ENCODE measurements at regions of chr2 and their contacts with region 1.

Region 1: DNA sequence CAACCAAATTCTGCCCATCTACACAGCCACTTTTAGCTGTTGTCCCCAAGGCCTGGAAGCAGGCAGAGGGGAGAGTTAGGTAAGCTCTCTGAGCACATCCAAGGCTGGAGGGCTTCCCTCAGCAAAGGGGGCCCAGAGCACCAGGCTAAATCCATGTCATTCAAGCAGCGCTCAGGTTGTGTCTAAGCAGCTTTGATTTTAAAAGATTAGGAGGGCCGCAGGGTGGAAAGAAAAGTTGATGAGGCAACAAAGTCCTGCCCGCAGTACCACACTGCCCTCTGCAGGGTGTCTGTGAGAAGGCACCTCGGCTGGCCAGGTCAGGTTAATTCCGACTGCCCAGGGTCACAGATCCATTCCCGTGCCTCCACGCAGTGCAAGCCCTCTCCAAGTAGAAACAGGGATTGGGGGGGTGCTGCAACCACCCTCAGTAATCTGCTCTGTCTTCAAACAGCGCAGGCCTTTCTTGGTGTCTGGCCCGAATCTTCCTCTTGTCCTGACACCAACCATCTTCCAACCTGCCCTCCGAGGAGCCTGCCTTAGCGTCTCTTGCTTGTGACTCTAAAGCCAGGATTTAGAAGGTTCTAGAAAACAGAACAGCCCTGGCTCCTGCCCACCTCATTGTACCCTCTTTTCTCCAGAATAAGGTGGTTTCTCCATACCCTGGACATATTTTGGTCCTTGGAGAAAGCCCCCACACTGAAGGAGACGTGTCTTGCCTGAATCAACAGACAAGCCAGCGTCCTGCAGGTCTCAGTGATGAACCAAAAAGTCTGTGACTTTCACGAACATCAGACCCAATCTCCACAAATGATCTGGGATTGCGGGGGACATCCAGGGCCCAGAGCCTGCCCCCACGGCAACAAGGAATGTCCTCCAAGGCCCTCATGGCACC is 289.2 kb downstream of the TNS1 start:
- DNase-seq: no peak
- H3K4me3 ChIP-seq: no peak overlapping the region
- H3K27me3 ChIP-seq: no peaks in the 10 kb centered on the region
- CTCF ChIP-seq: peak; percentile 98

Region 2: GRCh38 chr2:217510771-217511291 is 202.8 kb before region 1 on chr2:
- CTCF ChIA-PET with region 1: interaction called, 21 read pairs
- POLR2A ChIA-PET with region 1: no interaction called
- DNase-seq: peak; percentile 38
- H3K4me3 ChIP-seq: no peak overlapping the region
- H3K27me3 ChIP-seq: no peaks in the 10 kb centered on the region
- CTCF ChIP-seq: peak; percentile 80

Region 3: GRCh38 chr2:217521820-217522219 is 191.8 kb before region 1 on chr2:
- CTCF ChIA-PET with region 1: interaction called, 11 read pairs
- POLR2A ChIA-PET with region 1: no interaction called
- DNase-seq: no peak
- H3K4me3 ChIP-seq: no peak overlapping the region
- H3K27me3 ChIP-seq: no peaks in the 10 kb centered on the region
- CTCF ChIP-seq: no peak

Region 4: GRCh38 chr2:217736776-217737550 is 23.3 kb after region 1 on chr2:
- CTCF ChIA-PET with region 1: no interaction called
- POLR2A ChIA-PET with region 1: no interaction called
- DNase-seq: no peak
- H3K4me3 ChIP-seq: no peak overlapping the region
- H3K27me3 ChIP-seq: no peaks in the 10 kb centered on the region
- CTCF ChIP-seq: no peak

Region 5: DNA sequence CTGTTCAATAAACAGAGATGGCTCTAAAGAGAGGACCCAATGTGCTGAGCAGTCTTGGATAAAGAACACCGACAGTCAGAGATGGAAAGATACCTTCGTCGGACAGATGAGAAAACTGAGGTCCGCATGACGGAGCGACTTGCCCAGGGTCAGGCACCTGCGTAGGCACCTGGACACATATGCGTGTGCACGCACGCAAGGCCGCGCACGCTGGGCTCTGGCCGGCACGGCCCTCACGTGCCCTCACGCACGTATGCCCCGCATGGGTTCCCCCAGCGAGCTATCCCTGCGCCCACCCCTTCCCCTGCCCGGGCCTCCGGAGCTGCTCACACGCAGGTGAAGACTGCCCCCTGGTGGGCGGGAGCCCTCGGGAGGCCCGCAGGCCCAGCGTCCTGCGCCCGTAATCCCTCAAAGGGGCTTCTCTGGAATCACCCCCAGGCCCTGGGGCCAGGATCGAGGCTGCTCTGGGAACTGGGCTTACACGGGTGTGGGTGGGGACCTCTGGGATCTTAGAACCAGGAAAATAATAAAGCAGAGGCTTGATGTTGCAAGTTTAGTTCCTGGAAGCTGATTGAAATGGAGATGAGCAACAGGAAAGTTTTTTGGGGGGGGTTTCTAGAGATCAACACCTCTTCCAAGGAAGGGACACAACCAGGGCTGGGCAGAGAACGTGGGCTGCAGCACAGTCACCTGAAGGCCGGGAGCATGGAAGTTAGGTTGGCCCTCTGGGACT is 42.9 kb after region 1 on chr2:
- CTCF ChIA-PET with region 1: interaction called, 33 read pairs
- POLR2A ChIA-PET with region 1: no interaction called
- DNase-seq: no peak
- H3K4me3 ChIP-seq: no peak overlapping the region
- H3K27me3 ChIP-seq: no peaks in the 10 kb centered on the region
- CTCF ChIP-seq: peak; percentile 97

Measured in BJ (cell line).